ENCODE measurements at regions of chr1 and their contacts with region 1.

Region 1: GRCh38 chr1:34984793-34985608 is at the start of gene TMEM35B:
- DNase-seq: peak; percentile 59 to 87
- H3K4me3 ChIP-seq: peak within 1 kb of the TSS; percentile 73 to 100
- H3K27ac ChIP-seq: peak within 1 kb of the TSS; percentile 87 to 98
- H3K4me1 ChIP-seq: peaks cover 6 to 28% (median 19%) of the 10 kb centered on the region in 4 donors
- H3K27me3 ChIP-seq: no peaks in the 10 kb centered on the region
- CTCF ChIP-seq: no peak

Region 2: GRCh38 chr1:35030756-35031446 is 45.9 kb after region 1 on chr1:
- intact Hi-C with region 1: loop called (anchors 10 kb)
- DNase-seq: no peak
- H3K4me3 ChIP-seq: peak overlapping the region; percentile 64 to 69
- H3K27ac ChIP-seq: peak overlapping the region; percentile 87 to 91
- H3K4me1 ChIP-seq: peaks cover 0 to 27% (median 14%) of the 10 kb centered on the region in 4 donors
- H3K27me3 ChIP-seq: no peaks in the 10 kb centered on the region
- CTCF ChIP-seq: no peak

Region 3: DNA sequence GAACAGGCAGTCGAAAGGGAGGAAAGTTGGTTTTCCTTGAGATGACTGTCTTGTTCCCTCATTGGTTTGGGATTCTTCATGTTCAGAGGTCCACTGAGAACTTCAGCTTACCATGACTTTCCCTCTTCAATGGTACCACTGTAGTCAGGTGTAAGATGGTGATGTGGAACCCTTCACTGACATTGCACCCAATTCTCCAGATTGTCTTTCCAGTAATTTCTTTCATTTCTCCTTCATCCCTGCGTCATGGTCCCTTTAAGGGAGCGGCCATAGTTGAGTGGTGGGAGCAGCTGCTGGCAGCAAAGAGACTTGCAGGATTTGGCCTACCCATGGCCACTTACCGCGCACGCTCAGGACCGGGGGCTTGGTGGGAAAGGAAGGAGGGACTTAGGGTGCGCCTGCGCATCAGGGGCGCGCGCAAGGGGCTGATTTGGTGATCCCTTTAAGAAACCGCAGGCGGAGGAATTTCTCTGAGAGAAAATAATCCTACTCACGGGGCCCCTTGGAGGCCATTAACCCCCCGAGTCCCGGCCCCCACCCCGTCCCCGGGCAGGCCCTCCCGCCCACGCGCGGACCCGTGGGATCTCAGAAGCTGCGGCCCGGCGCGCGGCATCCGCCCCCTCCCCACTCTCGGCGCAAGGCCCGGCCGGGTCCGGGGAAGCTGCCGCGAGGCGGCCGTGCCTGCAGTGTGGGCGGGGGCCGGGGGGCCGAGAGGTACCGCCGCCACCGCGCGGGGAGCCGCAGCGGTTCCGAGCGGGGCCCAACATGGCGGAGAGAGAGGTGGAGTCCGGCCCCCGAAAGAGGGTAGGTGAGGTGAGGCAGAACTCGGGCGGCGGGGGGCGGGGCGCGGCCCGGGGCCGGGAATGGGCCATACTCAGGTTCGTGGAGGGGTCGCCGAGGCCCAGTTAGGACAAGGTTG is 283.5 kb after region 1 on chr1 and contains the start of gene ZMYM4:
- intact Hi-C with region 1: no loop called
- DNase-seq: peak; percentile 87 to 94
- H3K4me3 ChIP-seq: peak within 1 kb of the TSS; percentile 77 to 83
- H3K27ac ChIP-seq: peak within 1 kb of the TSS; percentile 78 to 88
- H3K4me1 ChIP-seq: peaks cover 0 to 41% (median 9%) of the 10 kb centered on the region in 4 donors
- H3K27me3 ChIP-seq: no peaks in the 10 kb centered on the region
- CTCF ChIP-seq: no peak

Measured in tibial artery (tissue), 4 donors.